ENCODE measurements at regions of chr11 and their contacts with region 1.

Region 1: GRCh38 chr11:129950101-129951091 is 52.2 kb downstream of the PRDM10 start:
- DNase-seq: peak; percentile 74 to 83 (median 74)
- H3K4me3 ChIP-seq: peak overlapping the region in 1 of 3 experiments; percentile 50
- H3K4me3 Mint-ChIP-seq: peak overlapping the region; percentile 65 to 74
- H3K27ac ChIP-seq: peak overlapping the region; percentile 79 to 84
- H3K27ac Mint-ChIP-seq: peak overlapping the region; percentile 77 to 94 (median 93)
- H3K4me1 ChIP-seq: peaks cover 47 to 54% of the 10 kb centered on the region in 2 donors
- H3K4me1 Mint-ChIP-seq: peaks cover 58% of the 10 kb centered on the region
- H3K27me3 ChIP-seq: no peaks in the 10 kb centered on the region
- H3K27me3 Mint-ChIP-seq: no peaks in the 10 kb centered on the region
- CTCF ChIP-seq: no peak

Region 2: GRCh38 chr11:129917231-129917630 is 33.2 kb before region 1 on chr11:
- intact Hi-C with region 1: no loop called
- DNase-seq: no peak
- H3K4me3 ChIP-seq: no peak overlapping the region
- H3K4me3 Mint-ChIP-seq: no peak overlapping the region
- H3K27ac ChIP-seq: no peak overlapping the region
- H3K27ac Mint-ChIP-seq: no peak overlapping the region
- H3K4me1 ChIP-seq: peaks cover 8 to 12% of the 10 kb centered on the region in 2 donors
- H3K4me1 Mint-ChIP-seq: peaks cover 12% of the 10 kb centered on the region
- H3K27me3 ChIP-seq: no peaks in the 10 kb centered on the region
- H3K27me3 Mint-ChIP-seq: peaks cover 0 to 3% (median 2%) of the 10 kb centered on the region in 3 donors
- CTCF ChIP-seq: no peak

Region 3: GRCh38 chr11:129930296-129930695 is 20.1 kb before region 1 on chr11:
- intact Hi-C with region 1: loop called in 1 of 2 experiments (anchors 2 kb)
- DNase-seq: peak; percentile 59 to 90 (median 76)
- H3K4me3 ChIP-seq: peak overlapping the region in 1 of 3 experiments; percentile 61
- H3K4me3 Mint-ChIP-seq: peak overlapping the region in 1 of 2 donors; percentile 69
- H3K27ac ChIP-seq: peak overlapping the region; percentile 86 to 91
- H3K27ac Mint-ChIP-seq: peak overlapping the region; percentile 90 to 95 (median 93)
- H3K4me1 ChIP-seq: peaks cover 35 to 46% of the 10 kb centered on the region in 2 donors
- H3K4me1 Mint-ChIP-seq: peaks cover 45% of the 10 kb centered on the region
- H3K27me3 ChIP-seq: no peaks in the 10 kb centered on the region
- H3K27me3 Mint-ChIP-seq: no peaks in the 10 kb centered on the region
- CTCF ChIP-seq: no peak

Region 4: GRCh38 chr11:129992161-129992944 is 42.0 kb after region 1 on chr11:
- intact Hi-C with region 1: loop called in 1 of 2 experiments (anchors 10 kb)
- DNase-seq: peak in 2 of 3 donors; percentile 25 to 35
- H3K4me3 ChIP-seq: no peak overlapping the region
- H3K4me3 Mint-ChIP-seq: no peak overlapping the region
- H3K27ac ChIP-seq: peak overlapping the region in 1 of 2 donors; percentile 4
- H3K27ac Mint-ChIP-seq: peak overlapping the region in 5 of 7 donors; percentile 35 to 70 (median 45)
- H3K4me1 ChIP-seq: no peaks in the 10 kb centered on the region
- H3K4me1 Mint-ChIP-seq: peaks cover 11% of the 10 kb centered on the region
- H3K27me3 ChIP-seq: no peaks in the 10 kb centered on the region
- H3K27me3 Mint-ChIP-seq: no peaks in the 10 kb centered on the region
- CTCF ChIP-seq: no peak

Measured in CD14-positive monocyte (primary cell).